ENCODE measurements at regions of chr7 and their contacts with region 1.

Region 1: DNA sequence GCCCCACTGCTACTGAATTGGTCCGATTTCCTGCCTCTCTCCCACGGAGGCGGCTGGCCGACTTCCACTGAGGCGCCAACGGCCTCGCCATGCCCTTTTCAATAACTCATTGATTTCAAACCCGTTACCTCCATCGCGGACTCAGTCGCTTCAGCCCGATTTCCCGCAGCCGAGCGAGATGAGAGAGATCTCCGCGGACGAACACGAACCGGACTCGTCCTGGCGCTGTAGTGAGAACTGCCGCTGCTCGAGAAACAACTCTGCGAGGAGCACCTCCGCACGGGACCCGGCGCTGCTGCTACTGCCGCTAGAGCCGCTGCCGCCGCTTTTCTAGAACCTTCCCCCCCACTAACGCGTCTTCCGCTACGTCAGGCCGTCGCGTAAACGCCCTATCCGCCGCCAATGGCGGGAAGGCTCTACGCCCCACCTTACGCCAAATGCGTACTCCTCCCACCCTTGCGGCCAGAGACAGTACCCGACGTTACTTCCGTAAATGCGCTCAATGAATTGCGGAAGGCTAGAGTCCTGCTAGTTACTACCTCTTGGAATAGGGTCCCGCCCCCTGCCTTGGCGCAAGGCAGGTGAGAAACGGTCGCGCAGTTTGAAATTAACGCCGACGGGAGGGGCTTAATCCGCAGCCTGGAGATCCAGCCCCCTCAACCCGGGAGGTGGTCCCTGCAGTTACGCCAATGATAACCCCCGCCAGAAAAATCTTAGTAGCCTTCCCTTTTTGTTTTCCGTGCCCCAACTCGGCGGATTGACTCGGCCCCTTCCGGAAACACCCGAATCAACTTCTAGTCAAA is at the start of gene HNRNPA2B1:
- DNase-seq: peak; percentile 97
- ATAC-seq: peak; percentile 71
- H3K4me3 Mint-ChIP-seq: peak within 1 kb of the TSS; percentile 100
- H3K27ac Mint-ChIP-seq: peak within 1 kb of the TSS; percentile 100
- H3K4me1 Mint-ChIP-seq: peaks cover 36% of the 10 kb centered on the region
- H3K27me3 Mint-ChIP-seq: no peaks in the 10 kb centered on the region
- total RNA-seq, gene HNRNPA2B1: 600 to 996 TPM

Region 2: GRCh38 chr7:24572997-24573625 is 1627.5 kb before region 1 on chr7 and contains the start of gene PALS2:
- CTCF ChIA-PET with region 1: no interaction called
- POLR2A ChIA-PET with region 1: no interaction called
- intact Hi-C with region 1: loop called in 1 of 2 experiments (anchors 5 kb)
- DNase-seq: peak; percentile 86
- ATAC-seq: peak; percentile 68
- H3K4me3 Mint-ChIP-seq: peak within 1 kb of the TSS; percentile 88
- H3K27ac Mint-ChIP-seq: peak within 1 kb of the TSS; percentile 86
- H3K4me1 Mint-ChIP-seq: peaks cover 34% of the 10 kb centered on the region
- H3K27me3 Mint-ChIP-seq: peaks cover 12% of the 10 kb centered on the region
- total RNA-seq, gene PALS2: 20.8 to 41.7 TPM

Region 3: GRCh38 chr7:25656581-25657026 is 544.0 kb before region 1 on chr7:
- CTCF ChIA-PET with region 1: no interaction called
- POLR2A ChIA-PET with region 1: no interaction called
- intact Hi-C with region 1: no loop called
- DNase-seq: no peak
- ATAC-seq: no peak
- H3K4me3 Mint-ChIP-seq: no peak overlapping the region
- H3K27ac Mint-ChIP-seq: no peak overlapping the region
- H3K4me1 Mint-ChIP-seq: peaks cover 12% of the 10 kb centered on the region
- H3K27me3 Mint-ChIP-seq: no peaks in the 10 kb centered on the region

Region 4: GRCh38 chr7:25951031-25951948 is 249.4 kb before region 1 on chr7:
- CTCF ChIA-PET with region 1: no interaction called
- POLR2A ChIA-PET with region 1: no interaction called
- intact Hi-C with region 1: loop called (anchors 1 to 2 kb)
- DNase-seq: peak; percentile 94
- ATAC-seq: peak; percentile 99
- H3K4me3 Mint-ChIP-seq: peak overlapping the region; percentile 80
- H3K27ac Mint-ChIP-seq: peak overlapping the region; percentile 72
- H3K4me1 Mint-ChIP-seq: peaks cover 17% of the 10 kb centered on the region
- H3K27me3 Mint-ChIP-seq: no peaks in the 10 kb centered on the region

Region 5: DNA sequence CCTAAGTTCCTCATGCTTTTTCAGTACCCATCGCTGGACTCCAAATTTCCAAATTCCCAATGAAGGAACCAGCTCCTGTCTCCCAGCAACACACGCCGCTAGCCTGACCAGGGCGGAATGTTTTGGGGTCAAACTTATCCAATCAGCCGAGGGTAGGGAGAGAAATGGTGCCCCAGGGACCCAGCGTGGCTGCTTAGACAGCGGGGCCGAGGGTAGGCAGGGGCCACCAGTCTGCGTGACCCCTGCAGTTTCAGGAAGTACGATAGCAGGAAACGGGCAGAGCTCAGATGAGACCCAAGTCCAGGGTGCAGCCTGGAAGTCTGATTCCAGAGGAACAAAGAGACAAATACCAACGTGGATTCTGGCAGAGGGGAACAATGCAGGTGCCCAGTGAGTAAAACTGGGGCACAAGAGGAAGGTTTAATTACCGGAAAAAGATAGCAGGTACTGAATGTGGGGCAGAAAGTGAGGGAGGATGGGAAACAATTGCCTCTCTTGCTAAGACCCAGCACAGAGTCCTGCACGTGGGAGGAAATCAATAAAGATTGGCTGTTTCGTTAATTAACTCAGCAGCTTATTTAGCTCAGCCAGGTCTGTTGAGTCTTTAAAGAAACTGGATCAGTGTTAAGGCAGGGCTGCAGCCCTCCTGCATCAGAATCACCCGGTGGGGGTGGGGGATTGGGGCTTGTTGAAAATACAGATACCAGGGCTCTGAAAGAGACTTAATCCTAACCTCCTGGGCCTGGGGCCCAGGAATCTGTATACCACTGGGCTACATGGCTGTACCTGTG is 99.1 kb before region 1 on chr7:
- CTCF ChIA-PET with region 1: interaction called, 4 read pairs
- POLR2A ChIA-PET with region 1: interaction called, 6 read pairs
- intact Hi-C with region 1: loop called in 1 of 2 experiments (anchors 1 kb)
- DNase-seq: peak; percentile 31
- ATAC-seq: peak; percentile 4
- H3K4me3 Mint-ChIP-seq: peak overlapping the region; percentile 64
- H3K27ac Mint-ChIP-seq: peak overlapping the region; percentile 88
- H3K4me1 Mint-ChIP-seq: peaks cover 47% of the 10 kb centered on the region
- H3K27me3 Mint-ChIP-seq: no peaks in the 10 kb centered on the region

Region 6: DNA sequence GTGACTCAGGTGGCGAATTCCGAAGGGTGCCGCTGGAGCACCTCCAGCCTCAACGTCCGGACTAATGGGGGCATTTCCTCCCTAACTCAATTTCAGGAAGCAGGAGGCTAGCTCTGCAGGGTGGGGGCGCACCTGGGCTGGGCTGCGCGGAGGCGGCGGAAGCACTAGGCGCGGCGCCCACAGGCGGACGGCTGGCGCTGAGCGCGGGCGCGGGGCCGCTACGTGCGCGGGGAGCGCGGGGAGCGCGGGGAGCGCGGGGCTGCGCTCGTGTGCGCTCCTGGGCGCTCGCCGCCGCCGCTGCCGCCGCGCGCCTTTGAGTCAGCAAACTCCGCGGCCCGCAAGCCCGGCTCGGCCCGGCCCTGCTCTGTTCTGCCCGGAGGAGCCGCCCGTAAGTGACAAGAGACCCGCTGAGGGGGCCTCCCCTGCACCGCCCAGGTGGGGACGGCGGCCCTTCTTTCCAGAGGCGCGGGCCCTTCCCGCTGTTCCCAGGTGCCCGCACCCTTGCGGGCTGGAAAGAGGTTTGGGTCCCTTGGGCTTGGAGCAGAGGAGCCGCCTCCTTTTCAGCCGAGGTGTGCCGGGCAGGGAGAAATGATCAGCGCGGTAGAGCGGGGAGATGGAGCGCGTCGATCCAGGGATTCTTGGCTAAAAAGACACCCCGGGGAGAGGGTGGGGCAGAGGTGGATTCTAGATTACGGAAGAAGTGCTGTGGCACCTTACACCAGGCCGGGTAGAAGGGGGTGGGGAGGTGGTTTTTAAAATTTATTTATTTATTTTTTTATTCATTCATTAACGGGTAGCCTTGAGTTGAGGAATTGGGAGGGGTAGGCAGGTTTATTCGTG is 91.3 kb after region 1 on chr7 and contains the start of gene SNX10:
- CTCF ChIA-PET with region 1: interaction called, 8 read pairs
- POLR2A ChIA-PET with region 1: interaction called, 9 read pairs
- intact Hi-C with region 1: loop called (anchors 1 to 2 kb)
- DNase-seq: peak; percentile 81
- ATAC-seq: peak; percentile 68
- H3K4me3 Mint-ChIP-seq: peak within 1 kb of the TSS; percentile 85
- H3K27ac Mint-ChIP-seq: peak within 1 kb of the TSS; percentile 84
- H3K4me1 Mint-ChIP-seq: peaks cover 33% of the 10 kb centered on the region
- H3K27me3 Mint-ChIP-seq: no peaks in the 10 kb centered on the region
- total RNA-seq, gene SNX10: 28.1 to 35.5 TPM

Region 7: GRCh38 chr7:26409661-26410547 is 209.3 kb after region 1 on chr7:
- CTCF ChIA-PET with region 1: no interaction called
- POLR2A ChIA-PET with region 1: no interaction called
- intact Hi-C with region 1: no loop called
- DNase-seq: no peak
- ATAC-seq: no peak
- H3K4me3 Mint-ChIP-seq: no peak overlapping the region
- H3K27ac Mint-ChIP-seq: no peak overlapping the region
- H3K4me1 Mint-ChIP-seq: no peaks in the 10 kb centered on the region
- H3K27me3 Mint-ChIP-seq: peaks cover 9% of the 10 kb centered on the region

Region 8: DNA sequence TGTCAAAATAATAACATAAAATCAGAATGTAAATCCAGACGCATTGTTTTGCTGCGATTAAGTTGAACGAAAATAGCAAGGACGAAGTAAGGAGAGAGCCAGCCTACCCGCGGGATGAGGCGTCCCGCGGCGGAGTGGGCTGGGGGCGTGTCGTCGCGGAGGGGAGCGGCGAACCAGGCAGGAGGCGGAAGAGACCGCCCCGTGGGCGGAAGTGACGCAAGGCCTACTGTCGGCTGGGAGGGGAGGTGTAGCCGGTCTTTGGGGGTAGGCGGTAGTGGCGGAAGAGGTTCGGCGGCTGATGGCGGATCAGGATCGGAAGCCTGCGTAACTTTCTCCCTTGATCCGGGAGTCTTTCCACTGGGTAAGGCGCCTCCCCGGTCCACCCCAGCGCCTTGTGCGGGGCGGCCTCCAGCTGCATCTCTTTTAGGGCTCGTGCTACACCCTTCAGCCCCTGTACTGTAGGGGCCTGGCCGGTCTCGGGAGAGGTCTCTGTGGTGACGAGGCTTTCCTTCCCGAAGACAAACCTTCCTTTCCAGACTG is 1539.3 kb after region 1 on chr7 and contains the start of gene TAX1BP1:
- CTCF ChIA-PET with region 1: no interaction called
- POLR2A ChIA-PET with region 1: no interaction called
- intact Hi-C with region 1: loop called in 1 of 2 experiments (anchors 5 kb)
- DNase-seq: peak; percentile 98
- ATAC-seq: peak; percentile 92
- H3K4me3 Mint-ChIP-seq: peak within 1 kb of the TSS; percentile 99
- H3K27ac Mint-ChIP-seq: peak within 1 kb of the TSS; percentile 99
- H3K4me1 Mint-ChIP-seq: peaks cover 34% of the 10 kb centered on the region
- H3K27me3 Mint-ChIP-seq: no peaks in the 10 kb centered on the region
- total RNA-seq, gene TAX1BP1: 101 to 109 TPM